CD4-positive, alpha-beta memory T cell (primary cell): ENCODE measurements at regions of chr17 and their contacts with region 1.

Region 1: GRCh38 chr17:75250009-75250471 is 11.4 kb downstream of the GGA3 start:
- DNase-seq: peak in 4 of 5 donors; percentile 43 to 91 (median 50)
- H3K4me3 ChIP-seq: peak overlapping the region in 1 of 2 donors; percentile 35
- H3K4me3 Mint-ChIP-seq: peak overlapping the region; percentile 78 to 90 (median 84)
- H3K27ac ChIP-seq: peak overlapping the region; percentile 51
- H3K27ac Mint-ChIP-seq: peak overlapping the region; percentile 90 to 99 (median 95)
- H3K4me1 ChIP-seq: peaks cover 40% of the 10 kb centered on the region
- H3K4me1 Mint-ChIP-seq: peaks cover 24 to 64% (median 48%) of the 10 kb centered on the region in 4 donors
- H3K27me3 ChIP-seq: no peaks in the 10 kb centered on the region
- H3K27me3 Mint-ChIP-seq: no peaks in the 10 kb centered on the region

Region 2: DNA sequence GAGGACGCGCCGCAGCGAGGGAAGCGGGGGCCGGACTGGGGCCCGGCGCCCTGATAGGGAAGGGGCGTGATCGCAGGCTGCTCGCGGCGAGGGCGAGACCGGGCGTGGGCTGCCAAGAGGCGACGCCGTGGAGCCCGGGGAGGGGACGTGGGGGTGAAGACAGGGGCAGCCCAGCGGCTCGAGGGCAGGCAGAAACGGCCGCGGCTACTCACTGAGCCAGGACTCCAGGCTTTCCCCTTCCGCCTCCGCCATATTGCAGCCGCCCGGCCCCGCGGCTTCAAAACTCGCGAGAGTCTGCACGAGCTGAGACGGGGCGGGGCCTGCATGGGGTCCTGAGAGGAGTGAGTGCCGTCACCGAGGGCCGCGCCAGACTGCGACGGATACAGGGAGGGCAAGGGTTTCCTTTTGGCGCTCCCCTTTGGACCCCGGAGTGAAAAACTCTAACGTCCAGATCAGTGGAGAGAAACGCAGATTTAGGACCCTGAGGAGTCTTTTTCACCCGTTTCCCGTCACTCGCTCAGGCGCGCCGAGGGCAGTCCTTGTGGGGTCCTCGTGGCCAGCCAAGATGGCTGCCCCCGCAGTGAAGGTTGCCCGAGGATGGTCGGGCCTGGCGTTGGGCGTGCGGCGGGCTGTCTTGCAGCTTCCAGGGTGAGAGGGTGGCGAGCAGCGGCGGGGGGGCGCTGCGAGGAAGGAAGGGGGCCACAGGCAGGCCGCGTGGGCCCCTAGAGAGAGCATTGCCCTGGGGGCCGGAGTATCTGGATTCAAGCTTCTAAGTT is 11.5 kb after region 1 on chr17 and contains the starts of genes GGA3 and MRPS7:
- CTCF ChIA-PET with region 1: interaction called, 8 read pairs
- POLR2A ChIA-PET with region 1: interaction called, 50 read pairs
- intact Hi-C with region 1: loop called (anchors 1 kb)
- DNase-seq: peak; percentile 95 to 99 (median 97)
- H3K4me3 ChIP-seq: peak within 1 kb of the TSS; percentile 77 to 99
- H3K4me3 Mint-ChIP-seq: peak within 1 kb of the TSS; percentile 93 to 99 (median 97)
- H3K27ac ChIP-seq: peak within 1 kb of the TSS; percentile 96
- H3K27ac Mint-ChIP-seq: peak within 1 kb of the TSS; percentile 100
- H3K4me1 ChIP-seq: peaks cover 35% of the 10 kb centered on the region
- H3K4me1 Mint-ChIP-seq: peaks cover 32 to 65% (median 48%) of the 10 kb centered on the region in 4 donors
- H3K27me3 ChIP-seq: no peaks in the 10 kb centered on the region
- H3K27me3 Mint-ChIP-seq: no peaks in the 10 kb centered on the region
- total RNA-seq, gene GGA3: 121 to 122 TPM
- total RNA-seq, gene MRPS7: 34.1 to 36.3 TPM

Region 3: GRCh38 chr17:75271233-75271954 is 21.4 kb after region 1 on chr17:
- CTCF ChIA-PET with region 1: interaction called, 5 read pairs
- POLR2A ChIA-PET with region 1: interaction called, 15 read pairs
- intact Hi-C with region 1: no loop called
- DNase-seq: peak; percentile 86 to 94 (median 88)
- H3K4me3 ChIP-seq: peak overlapping the region; percentile 42 to 82
- H3K4me3 Mint-ChIP-seq: peak overlapping the region; percentile 80 to 91 (median 84)
- H3K27ac ChIP-seq: peak overlapping the region; percentile 89
- H3K27ac Mint-ChIP-seq: peak overlapping the region; percentile 25 to 94 (median 88)
- H3K4me1 ChIP-seq: peaks cover 27% of the 10 kb centered on the region
- H3K4me1 Mint-ChIP-seq: peaks cover 10 to 35% (median 22%) of the 10 kb centered on the region in 4 donors
- H3K27me3 ChIP-seq: no peaks in the 10 kb centered on the region
- H3K27me3 Mint-ChIP-seq: no peaks in the 10 kb centered on the region